Aorta (tissue), 5 donors: ENCODE measurements at regions of chr1 and their contacts with region 1.

Region 1: DNA sequence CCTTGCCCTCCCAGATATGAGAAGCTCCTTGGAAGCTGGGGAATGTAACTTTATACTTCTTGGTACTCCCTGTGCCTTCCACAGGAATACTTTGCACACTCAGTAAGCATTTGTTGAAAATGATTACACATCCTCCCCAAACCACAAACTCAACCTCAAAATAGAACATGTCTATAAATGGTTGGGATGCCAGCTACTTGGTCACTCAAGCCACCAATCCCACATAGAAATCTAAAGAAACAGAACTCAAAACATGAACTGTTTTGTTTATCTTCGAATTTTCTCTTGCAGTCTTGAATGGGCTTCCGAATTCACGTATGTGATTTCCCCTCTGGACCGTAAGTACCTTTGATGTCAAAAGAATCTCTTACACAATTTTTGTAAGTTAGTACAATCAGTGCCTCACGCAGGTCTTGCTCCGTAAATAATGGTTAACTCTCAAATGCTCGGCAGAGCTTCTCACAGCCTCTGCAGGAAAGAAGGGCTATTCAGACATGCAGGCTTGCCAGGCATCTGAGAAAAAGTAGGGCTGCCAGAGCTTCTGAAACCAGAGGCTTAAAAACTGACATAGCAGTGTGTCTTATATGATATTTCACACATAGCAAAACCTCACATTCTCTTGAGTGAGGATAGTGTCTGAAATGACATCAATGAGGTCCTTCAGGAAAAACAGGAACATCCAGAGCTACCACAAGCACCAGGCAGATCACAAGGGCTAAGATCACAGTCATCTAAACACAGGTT is 26.8 kb downstream of the SORT1 start:
- DNase-seq: no peak
- ATAC-seq: peak; percentile 76
- H3K4me3 ChIP-seq: peak overlapping the region in 1 of 2 donors; percentile 83
- H3K27ac ChIP-seq: peak overlapping the region; percentile 99 to 100
- H3K4me1 ChIP-seq: peaks cover 4 to 8% of the 10 kb centered on the region in 2 donors
- H3K27me3 ChIP-seq: no peaks in the 10 kb centered on the region

Region 2: DNA sequence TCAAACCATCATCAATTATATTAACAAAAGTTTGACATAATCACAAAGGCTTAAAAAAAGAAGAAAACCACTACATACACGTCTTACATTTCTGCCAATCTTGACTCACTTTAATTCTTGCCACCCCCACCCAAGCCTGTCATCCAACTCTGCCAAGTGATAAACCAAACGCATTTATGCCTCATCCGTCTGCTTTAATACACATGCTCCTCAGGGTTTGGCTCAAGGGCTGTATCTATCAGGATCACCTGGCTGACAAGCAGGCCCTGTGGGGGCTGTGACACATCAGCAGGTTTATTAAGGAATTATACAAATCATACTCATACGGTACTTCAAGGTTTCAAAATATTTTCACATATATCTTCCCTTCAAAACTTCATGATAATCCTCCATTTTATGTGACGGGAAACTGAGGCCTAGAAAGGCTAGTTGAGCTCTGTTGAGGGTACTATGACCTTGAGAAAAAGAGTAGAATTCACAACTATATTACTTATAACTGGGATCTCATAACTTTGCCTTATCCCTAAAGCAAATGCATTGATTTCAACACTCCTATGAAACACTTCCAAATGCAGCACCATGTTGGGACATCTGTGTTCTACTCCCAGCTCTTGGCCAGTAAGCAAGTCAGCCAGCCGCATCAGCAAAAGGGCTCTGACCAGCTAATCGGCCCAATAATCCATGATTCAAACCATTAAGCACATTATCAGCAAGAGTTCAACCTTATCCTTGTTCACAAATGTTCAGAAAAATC is 18.2 kb after region 1 on chr1:
- intact Hi-C with region 1: loop called in 1 of 2 experiments (anchors 1 kb)
- DNase-seq: no peak
- ATAC-seq: no peak
- H3K4me3 ChIP-seq: peak overlapping the region in 1 of 2 donors; percentile 34
- H3K27ac ChIP-seq: peak overlapping the region; percentile 99
- H3K4me1 ChIP-seq: peaks cover 12 to 20% of the 10 kb centered on the region in 2 donors
- H3K27me3 ChIP-seq: no peaks in the 10 kb centered on the region